H1 (cell line): ENCODE measurements at regions of chr10 and their contacts with region 1.

Region 1: DNA sequence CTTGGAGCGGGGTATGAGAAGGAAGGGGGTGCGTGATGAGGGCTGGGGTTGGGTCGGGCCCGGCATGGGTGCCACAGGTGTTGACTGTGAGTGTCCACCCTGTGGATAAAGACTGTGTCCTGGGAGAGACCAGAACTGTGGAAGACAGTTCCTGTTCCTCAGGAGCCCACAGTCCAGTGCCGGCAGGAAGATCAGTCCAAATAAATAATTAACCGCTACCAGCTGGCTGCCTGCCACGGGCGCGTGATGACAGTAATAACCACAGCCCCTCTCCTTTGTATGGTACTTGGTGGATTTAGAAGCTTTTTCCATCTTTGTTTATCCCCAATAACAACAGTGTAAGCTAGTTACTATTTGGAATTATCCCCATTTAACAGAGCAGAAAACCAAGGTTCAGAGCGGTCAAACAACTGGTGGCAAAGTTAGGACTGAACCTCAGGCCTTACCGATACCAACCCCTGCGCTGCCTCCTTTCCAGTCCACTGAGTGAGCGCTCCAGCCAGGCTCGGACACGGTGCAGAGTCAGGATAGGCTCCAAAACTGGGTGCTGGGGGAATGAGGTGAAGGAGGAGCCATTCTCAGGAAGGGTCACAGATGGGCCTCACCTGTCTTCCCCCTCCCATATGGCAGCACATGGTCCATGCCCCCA is 5.1 kb downstream of the ZMIZ1 start:
- DNase-seq: no peak
- H3K4me3 ChIP-seq: no peak overlapping the region
- H3K27ac ChIP-seq: no peak overlapping the region
- H3K4me1 ChIP-seq: peaks cover 10 to 40% (median 25%) of the 10 kb centered on the region in 4 experiments
- H3K27me3 ChIP-seq: no peaks in the 10 kb centered on the region; a peak in 1 of 7 replicates
- CTCF ChIP-seq: no peak
- EP300 ChIP-seq: no peak
- POLR2A ChIP-seq: no peak
- RAD21 ChIP-seq: no peak

Region 2: DNA sequence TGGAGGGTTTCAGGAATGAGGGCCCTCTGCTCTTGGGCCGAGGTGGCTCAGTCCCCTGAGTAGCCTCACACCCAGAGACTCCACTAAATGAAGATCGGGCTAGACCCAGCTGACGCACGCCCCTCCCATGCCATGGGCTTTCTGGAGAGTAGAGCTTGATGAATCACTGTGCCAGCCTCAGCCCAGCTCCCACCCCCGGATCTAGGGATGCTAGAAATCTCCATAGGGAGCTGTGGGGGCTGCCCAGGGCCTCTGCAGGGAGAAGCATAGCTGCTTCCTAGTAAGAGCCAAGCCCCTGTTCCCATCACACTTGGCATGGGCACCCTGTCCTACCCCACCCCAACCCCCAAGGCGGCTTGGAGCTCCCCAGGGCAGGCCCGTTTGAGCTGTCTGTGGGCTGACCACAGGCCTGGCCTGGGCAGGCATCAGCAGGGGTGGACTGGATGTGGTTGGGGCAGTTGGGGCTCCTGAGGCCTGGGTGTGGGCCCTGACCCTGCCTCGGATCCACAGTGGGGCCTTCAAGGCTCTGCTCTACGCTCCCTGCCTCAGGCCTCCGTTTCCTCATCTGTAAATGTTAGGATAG is 116.0 kb after region 1 on chr10:
- CTCF ChIA-PET with region 1: interaction called, 34 read pairs
- POLR2A ChIA-PET with region 1: interaction called, 4 read pairs
- DNase-seq: no peak
- H3K4me3 ChIP-seq: no peak overlapping the region
- H3K27ac ChIP-seq: no peak overlapping the region
- H3K4me1 ChIP-seq: peaks cover 0 to 14% (median 6%) of the 10 kb centered on the region in 4 experiments; a peak in 6 of 7 replicates
- H3K27me3 ChIP-seq: no peaks in the 10 kb centered on the region
- CTCF ChIP-seq: no peak
- EP300 ChIP-seq: no peak
- POLR2A ChIP-seq: no peak
- RAD21 ChIP-seq: no peak